Dorsolateral prefrontal cortex (tissue), 120 donors: ENCODE measurements at regions of chr19 and their contacts with region 1.

Region 1: DNA sequence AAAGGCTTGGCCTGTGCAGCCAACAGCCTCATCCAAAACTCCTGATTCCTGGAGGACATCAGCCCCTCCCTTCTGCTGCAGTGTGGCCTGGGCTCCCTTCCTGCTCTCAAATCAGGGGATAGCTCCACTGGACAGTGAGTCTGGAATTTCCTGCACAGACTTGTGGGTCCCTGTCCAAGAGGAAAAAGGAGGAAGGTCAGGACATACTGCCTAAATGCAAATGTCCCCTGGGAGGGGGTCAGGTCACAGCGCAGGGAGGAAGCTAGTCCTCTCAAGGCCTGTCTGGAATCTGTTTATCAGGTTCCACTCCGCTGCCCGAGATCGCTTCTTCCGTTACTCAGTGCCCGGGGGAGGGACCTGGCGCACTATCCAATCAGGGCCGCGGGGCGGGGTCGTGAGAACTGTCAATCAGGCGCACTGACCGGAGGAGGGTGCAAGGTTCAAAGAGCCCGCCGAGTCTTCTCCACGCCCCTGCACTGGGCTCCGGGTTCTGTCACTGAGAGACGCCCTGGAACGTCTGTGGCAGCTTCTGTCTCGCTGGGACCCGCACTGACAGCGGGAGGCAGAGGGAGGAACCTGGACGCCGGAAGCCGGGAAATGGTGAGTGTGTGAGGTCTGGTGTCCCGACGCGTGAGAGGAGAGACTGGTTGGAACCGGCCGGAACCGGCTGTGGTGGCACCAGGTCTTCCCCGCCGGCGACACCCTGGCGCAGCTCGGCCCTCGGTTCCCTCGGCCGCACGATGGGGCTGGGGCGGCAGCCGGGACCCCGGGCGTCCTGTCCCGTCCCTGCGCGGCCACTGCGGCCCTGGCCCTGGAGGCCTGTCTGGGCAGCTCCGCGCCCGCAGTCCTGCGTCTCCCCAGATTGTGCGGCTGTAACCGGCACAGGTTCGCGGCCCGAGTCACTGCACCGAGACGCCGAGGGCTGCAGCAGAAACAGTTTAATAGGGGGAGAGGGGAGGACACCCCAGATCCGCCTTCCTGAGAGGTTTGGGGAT is at the start of gene ZNF441:
- DNase-seq: peak; percentile 96 to 99 (median 98)
- H3K4me3 ChIP-seq: peak within 1 kb of the TSS; percentile 63 to 98 (median 86)
- H3K27ac ChIP-seq: peak within 1 kb of the TSS; percentile 55 to 95 (median 88)
- H3K27me3 ChIP-seq: no peaks in the 10 kb centered on the region
- CTCF ChIP-seq: peak in 29 of 56 donors; percentile 8 to 54 (median 25)
- total RNA-seq, gene ZNF441: 5.8 to 26.6 (median 13.8) TPM

Region 2: DNA sequence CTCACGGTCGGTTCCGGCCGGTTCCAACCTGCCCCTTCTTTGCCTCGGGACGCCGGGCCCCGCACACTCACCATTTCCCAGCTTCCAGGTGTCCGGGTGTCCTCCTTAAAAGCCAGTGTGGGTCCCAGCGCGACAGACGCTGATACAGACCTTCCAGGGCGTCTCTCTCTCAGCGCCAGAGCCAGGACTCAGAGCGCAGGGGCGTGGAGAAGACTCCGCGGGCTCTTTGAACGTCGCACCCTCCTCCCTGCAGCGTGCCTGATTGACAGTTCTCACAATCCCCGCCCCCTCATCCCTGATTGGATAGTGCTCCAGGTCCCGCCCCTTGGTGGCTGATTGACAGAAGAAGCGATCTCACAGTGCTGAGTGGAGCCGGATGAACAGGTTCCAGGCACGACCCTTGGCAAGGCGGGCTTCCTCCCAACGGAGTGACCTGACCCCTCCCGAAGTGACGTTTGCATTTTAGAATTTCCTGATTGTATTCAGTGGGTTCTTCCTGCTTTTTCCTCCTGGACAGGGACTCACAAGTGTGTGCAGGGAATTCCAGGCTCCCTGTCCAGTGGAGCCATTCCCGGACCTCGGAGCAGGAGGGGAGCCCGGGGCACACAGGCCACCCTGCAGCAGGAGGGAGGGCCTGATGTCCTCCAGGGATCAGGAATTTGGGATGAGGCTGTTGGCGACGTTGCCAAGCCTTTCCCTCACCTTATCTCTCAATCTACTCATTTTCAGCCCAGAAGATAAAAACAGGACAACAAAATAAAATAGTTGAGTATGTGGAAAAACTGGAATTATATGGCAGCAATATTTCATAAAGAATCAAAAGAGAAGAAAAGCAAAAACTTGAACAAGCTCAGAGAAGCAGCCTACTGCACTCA is 27.9 kb before region 1 on chr19 and contains the start of gene ZNF823:
- intact Hi-C with region 1: loop called in 1 of 2 experiments (anchors 2 kb)
- DNase-seq: peak; percentile 94 to 100 (median 98)
- H3K4me3 ChIP-seq: peak within 1 kb of the TSS; percentile 63 to 99 (median 92)
- H3K27ac ChIP-seq: peak within 1 kb of the TSS; percentile 25 to 93 (median 84)
- H3K27me3 ChIP-seq: no peaks in the 10 kb centered on the region
- CTCF ChIP-seq: peak in 10 of 56 donors; percentile 11 to 31 (median 21)
- total RNA-seq, gene ZNF823: 3.1 to 13.2 (median 7.7) TPM